ENCODE measurements at regions of chr15 and their contacts with region 1.

Region 1: DNA sequence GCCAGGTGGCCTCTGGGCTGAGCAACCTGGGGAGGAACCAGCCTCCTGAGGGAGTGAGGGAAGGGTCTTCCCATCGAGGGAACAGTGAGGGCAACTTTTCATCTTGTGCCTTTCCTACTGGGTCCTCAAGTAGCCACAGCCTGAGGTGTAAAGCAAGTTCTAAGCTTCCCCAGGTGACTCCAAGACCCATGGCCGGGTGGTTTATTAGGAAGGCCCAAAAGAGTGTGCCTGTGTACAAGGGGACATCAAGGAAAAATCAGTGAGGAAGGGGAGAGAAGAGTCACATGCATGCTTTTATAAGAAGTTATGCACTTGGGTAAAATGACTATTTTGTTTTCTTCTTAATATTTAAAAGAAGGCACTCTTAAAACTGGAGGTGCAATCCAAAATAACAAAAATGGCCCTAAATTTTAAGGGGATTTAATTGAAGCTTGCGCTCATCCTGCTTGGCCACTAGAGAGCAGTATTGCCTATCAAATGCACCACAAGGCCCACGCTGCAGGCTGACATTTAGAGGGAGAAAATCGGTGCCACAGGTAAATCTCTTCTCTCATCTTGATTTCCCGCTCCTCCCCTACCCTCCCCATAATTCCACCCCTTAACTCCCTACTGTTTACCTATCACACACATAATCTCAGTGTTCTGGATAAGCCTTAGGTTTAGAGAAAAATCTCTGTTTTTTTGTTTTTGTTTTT is 6.7 kb downstream of the NANOGP8 start:
- DNase-seq: no peak
- ATAC-seq: peak; percentile 49 to 64 (median 59)
- H3K4me3 ChIP-seq: no peak overlapping the region
- H3K27ac ChIP-seq: no peak overlapping the region
- H3K4me1 ChIP-seq: no peaks in the 10 kb centered on the region
- H3K27me3 ChIP-seq: no peaks in the 10 kb centered on the region
- CTCF ChIP-seq: peak; percentile 53 to 80 (median 71)
- POLR2A ChIP-seq: no peak

Region 2: GRCh38 chr15:35115155-35115725 is 36.9 kb after region 1 on chr15:
- intact Hi-C with region 1: no loop called
- DNase-seq: no peak
- ATAC-seq: no peak
- H3K4me3 ChIP-seq: no peak overlapping the region
- H3K27ac ChIP-seq: no peak overlapping the region
- H3K4me1 ChIP-seq: no peaks in the 10 kb centered on the region
- H3K27me3 ChIP-seq: no peaks in the 10 kb centered on the region
- CTCF ChIP-seq: no peak
- POLR2A ChIP-seq: no peak

Region 3: GRCh38 chr15:35136321-35137189 is 58.2 kb after region 1 on chr15:
- intact Hi-C with region 1: loop called in 1 of 10 experiments (anchors 10 kb)
- DNase-seq: no peak
- ATAC-seq: no peak
- H3K4me3 ChIP-seq: no peak overlapping the region
- H3K27ac ChIP-seq: no peak overlapping the region
- H3K4me1 ChIP-seq: no peaks in the 10 kb centered on the region
- H3K27me3 ChIP-seq: no peaks in the 10 kb centered on the region
- CTCF ChIP-seq: no peak
- POLR2A ChIP-seq: no peak

Region 4: DNA sequence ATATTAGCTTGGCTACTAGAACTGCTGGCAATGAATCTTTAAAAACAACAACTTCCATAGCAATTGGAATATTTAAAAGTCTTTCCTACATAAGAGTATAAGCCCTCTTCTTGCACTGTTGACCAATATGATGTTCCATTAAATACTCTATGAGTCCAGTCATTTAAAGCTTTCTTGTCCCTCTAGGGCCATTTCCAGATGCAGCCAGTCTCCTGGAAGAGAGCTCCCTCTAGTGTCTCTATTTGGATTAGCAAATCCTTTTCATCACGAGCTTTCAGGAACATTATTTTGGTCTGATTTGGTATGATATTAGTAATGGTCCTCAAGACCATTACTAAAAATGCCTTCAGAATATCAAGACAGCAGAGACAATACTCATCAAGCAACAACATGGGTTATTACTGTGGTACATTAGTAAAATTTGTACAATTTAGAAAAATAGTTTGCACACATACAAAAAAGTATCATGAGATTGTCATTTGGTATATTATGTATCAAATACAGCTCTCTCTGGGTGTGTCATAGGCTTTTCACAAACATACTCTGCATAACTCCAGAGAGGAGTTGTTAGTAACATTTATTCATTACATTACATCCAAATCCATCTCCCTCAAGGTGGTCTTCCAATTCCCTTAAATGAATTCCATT is 366.3 kb after region 1 on chr15:
- intact Hi-C with region 1: loop called (anchors 2 to 10 kb)
- DNase-seq: no peak
- ATAC-seq: peak in 1 of 4 donors; percentile 39
- H3K4me3 ChIP-seq: no peak overlapping the region
- H3K27ac ChIP-seq: no peak overlapping the region
- H3K4me1 ChIP-seq: no peaks in the 10 kb centered on the region
- H3K27me3 ChIP-seq: no peaks in the 10 kb centered on the region
- CTCF ChIP-seq: peak; percentile 65 to 86 (median 78)
- POLR2A ChIP-seq: no peak

Measured in heart left ventricle (tissue), 16 donors.